ENCODE measurements at regions of chr17 and their contacts with region 1.

Region 1: DNA sequence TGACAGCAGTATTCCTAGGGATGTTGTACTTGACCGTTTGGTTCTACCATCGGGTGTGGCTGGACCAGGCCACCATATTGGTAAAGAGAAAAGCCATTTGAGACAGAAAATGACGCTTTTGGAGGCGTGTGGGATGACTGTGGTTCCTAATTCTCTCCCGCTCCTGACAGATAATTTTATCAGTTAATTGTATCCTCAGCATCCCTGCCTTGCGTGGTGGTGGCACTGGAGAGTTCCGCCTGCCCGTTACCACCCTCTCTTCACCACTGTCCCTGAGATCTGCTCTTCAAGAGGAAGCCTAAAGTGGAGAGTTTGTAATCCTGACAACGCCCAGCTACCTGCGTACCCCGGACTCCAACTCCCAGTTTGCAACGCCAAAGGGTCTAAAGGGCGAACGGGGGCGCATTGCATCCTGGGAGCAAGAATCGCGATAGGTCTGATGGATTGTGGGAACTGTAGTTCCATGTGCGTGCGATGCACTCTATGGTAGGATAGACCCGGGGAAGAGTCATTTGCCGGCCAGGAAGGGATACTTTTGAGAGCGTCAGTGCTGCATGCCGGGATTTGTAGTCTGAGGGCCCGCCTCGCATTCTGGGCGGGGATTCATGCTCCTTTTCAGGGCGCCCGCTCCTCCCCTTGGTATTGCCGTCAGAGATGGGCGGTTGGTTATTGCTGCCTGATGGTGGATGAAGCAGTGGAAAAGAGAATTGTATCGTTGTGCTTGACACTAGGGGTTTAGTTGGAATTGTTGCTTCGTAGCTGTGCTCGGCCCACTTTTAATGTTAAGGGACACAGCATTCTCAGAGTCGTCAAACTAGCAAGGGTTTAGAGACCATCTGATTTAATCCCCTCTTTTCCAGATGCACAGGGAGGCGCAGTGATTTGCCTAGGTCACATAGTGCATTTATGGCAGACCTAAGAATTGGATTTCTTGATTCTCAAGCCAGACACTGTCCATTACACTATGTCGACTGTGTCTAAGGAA is 965 bp upstream of the PHF12 start:
- DNase-seq: peak; percentile 94
- ATAC-seq: peak; percentile 74
- H3K4me3 Mint-ChIP-seq: no peak overlapping the region
- H3K27ac Mint-ChIP-seq: no peak overlapping the region
- H3K4me1 Mint-ChIP-seq: peaks cover 28% of the 10 kb centered on the region
- H3K27me3 Mint-ChIP-seq: no peaks in the 10 kb centered on the region
- CTCF ChIP-seq: no peak

Region 2: GRCh38 chr17:28698253-28698941 is 253.9 kb before region 1 on chr17:
- CTCF ChIA-PET with region 1: no interaction called
- POLR2A ChIA-PET with region 1: no interaction called
- DNase-seq: no peak
- ATAC-seq: no peak
- H3K4me3 Mint-ChIP-seq: no peak overlapping the region
- H3K27ac Mint-ChIP-seq: no peak overlapping the region
- H3K4me1 Mint-ChIP-seq: peaks cover 9% of the 10 kb centered on the region
- H3K27me3 Mint-ChIP-seq: no peaks in the 10 kb centered on the region
- CTCF ChIP-seq: no peak

Region 3: GRCh38 chr17:28902819-28903545 is 49.3 kb before region 1 on chr17 and contains the start of gene DHRS13:
- CTCF ChIA-PET with region 1: interaction called, 11 read pairs
- POLR2A ChIA-PET with region 1: interaction called, 3 read pairs
- DNase-seq: peak; percentile 95
- ATAC-seq: peak; percentile 89
- H3K4me3 Mint-ChIP-seq: peak within 1 kb of the TSS; percentile 85
- H3K27ac Mint-ChIP-seq: peak within 1 kb of the TSS; percentile 61
- H3K4me1 Mint-ChIP-seq: peaks cover 31% of the 10 kb centered on the region
- H3K27me3 Mint-ChIP-seq: no peaks in the 10 kb centered on the region
- CTCF ChIP-seq: peak; percentile 100
- total RNA-seq, gene DHRS13: 26.5 to 29.5 TPM (median 28.5 TPM) in 3 replicates

Region 4: DNA sequence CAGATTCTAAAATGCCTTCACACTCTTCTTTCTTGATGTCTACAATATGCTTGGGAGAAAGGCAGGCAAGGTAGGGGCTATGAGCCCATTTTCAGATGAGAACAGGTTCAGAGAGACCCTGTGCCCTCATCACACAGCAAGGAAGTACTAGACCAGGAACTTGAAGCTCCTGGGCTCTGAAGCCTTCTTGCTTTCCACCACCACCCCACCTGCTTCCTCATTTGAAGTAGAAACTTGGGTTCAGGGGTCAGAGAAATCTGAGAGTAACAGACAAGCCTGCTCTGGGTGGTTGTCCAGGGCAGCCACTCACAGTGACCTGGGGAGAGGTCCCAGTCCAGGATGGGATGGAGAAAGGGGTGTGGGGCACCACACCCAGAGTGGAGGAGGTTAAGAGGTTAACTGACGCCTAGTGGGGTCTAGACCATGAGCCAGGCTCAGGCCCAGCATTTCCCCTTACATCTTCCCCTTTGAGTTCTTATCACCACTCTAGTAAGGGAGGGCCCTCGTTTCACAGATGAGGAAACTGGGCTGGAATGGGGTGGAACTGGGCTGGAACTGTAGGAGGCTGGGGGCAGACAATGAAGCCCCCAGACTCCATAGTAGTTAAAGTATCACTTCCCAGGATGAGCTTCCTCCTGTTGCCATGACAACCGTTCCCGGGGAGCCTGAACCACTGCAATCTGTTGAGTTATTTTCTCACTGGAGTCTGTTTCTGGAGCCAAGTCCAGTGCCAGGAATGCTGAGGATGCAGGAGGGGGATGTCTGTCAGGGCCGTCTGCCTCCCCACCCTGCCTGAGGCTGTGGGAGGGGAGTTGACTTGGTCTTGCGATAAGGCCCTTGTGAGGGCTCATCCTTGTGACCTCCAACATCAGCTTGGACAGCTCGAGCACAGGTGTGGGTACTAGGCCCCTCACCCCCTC is 15.2 kb after region 1 on chr17:
- CTCF ChIA-PET with region 1: interaction called, 49 read pairs
- POLR2A ChIA-PET with region 1: interaction called, 4 read pairs
- DNase-seq: no peak
- ATAC-seq: no peak
- H3K4me3 Mint-ChIP-seq: no peak overlapping the region
- H3K27ac Mint-ChIP-seq: 0 out of 2 replicates have a peak overlapping the region, but pooled peaks have one; percentile 14
- H3K4me1 Mint-ChIP-seq: peaks cover 43% of the 10 kb centered on the region
- H3K27me3 Mint-ChIP-seq: no peaks in the 10 kb centered on the region; the same call in 1 of the 2 replicates
- CTCF ChIP-seq: no peak

Region 5: DNA sequence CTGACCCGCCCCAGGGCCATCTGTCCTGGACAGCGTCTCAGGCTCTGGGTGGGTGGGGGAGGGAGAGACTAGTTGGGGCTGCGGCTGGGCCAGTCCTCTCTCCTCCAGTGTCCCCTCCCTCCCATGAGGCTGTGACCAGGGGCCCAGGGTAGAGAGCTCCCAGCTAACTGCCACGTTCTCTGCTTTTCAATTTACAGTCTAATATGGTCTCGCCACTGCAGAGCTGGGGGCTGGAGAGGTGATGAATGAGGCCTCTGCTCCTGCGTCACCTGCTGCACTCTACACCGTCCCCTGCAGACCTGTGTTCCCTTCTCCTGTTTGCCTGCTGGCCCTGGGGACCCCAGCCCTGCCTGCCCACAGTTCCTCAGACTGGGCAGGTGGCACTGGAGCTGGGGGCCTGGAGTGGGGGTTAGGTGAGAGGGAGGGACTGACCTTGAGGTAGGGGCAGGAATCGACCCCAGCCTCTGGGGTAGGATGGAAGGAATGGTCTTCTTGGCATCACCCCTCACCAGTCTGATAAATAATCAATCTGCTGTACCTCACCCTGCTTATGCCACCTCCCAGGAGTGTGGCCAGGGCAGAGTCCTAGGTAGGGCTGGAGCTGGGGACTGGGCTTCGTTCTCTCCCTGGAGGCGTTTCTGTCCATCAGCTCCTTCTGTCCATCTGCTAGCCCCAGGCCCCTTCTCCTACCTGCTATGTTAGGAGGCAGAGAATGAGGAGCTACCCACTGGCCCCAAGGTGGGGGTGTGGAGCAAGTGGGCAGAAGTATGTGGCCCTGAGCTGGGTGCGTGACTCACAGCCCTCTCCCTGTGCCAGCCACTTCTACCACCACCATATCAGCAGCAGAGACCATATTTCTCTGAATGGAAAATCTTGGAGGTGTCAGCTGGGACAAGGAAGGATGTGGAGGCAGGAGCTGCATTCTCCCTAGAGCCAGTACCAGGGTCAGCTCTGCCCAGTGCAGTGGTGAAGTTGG is 40.6 kb after region 1 on chr17:
- CTCF ChIA-PET with region 1: interaction called, 18 read pairs
- POLR2A ChIA-PET with region 1: no interaction called
- DNase-seq: no peak
- ATAC-seq: no peak
- H3K4me3 Mint-ChIP-seq: no peak overlapping the region
- H3K27ac Mint-ChIP-seq: no peak overlapping the region
- H3K4me1 Mint-ChIP-seq: peaks cover 18% of the 10 kb centered on the region
- H3K27me3 Mint-ChIP-seq: peaks cover 23% of the 10 kb centered on the region
- CTCF ChIP-seq: no peak

Region 6: GRCh38 chr17:29042679-29043538 is 90.6 kb after region 1 on chr17 and contains the start of gene PIPOX:
- CTCF ChIA-PET with region 1: interaction called, 10 read pairs
- POLR2A ChIA-PET with region 1: no interaction called
- DNase-seq: peak; percentile 80
- ATAC-seq: peak; percentile 87
- H3K4me3 Mint-ChIP-seq: peak within 1 kb of the TSS; percentile 41
- H3K27ac Mint-ChIP-seq: peak within 1 kb of the TSS; percentile 98
- H3K4me1 Mint-ChIP-seq: peaks cover 63% of the 10 kb centered on the region
- H3K27me3 Mint-ChIP-seq: no peaks in the 10 kb centered on the region
- CTCF ChIP-seq: no peak
- total RNA-seq, gene PIPOX: 32.4 to 34.2 TPM (median 34.1 TPM) in 3 replicates

Region 7: DNA sequence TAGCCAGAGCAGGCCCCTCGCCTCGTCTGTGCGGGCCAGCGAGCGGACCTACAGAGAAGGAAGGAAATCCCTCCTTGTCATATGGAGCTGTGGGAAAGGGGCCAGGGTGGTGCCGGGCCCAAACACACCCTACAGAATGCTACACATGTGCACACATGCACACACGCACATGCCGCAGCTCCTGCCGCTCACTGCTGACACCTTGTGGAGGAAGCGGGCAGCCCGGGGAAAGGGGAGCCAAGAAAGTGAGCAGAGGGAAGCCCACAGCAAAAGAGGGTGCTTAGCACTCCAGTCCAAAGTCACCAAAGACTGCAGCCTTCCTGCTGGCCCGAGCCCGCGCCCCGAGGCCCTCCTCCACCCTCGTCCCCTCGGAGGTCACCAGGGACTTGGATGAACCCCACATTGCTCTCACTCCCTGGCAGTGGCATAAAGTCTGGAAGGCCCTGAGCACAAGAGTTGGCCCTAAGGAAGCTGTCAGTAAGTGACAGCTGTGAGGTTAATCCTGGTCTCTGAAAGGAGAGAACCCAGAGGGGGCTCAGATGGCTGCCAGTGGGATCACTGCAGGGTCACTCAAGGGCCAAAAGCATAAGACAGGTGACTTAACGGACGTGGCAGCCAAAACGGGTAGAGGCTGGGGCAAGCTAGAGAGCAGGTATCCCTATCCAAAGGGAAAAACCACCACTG is 159.7 kb after region 1 on chr17:
- CTCF ChIA-PET with region 1: interaction called, 762 read pairs
- POLR2A ChIA-PET with region 1: no interaction called
- DNase-seq: peak; percentile 83
- ATAC-seq: peak; percentile 45
- H3K4me3 Mint-ChIP-seq: no peak overlapping the region
- H3K27ac Mint-ChIP-seq: no peak overlapping the region
- H3K4me1 Mint-ChIP-seq: peaks cover 27% of the 10 kb centered on the region
- H3K27me3 Mint-ChIP-seq: no peaks in the 10 kb centered on the region
- CTCF ChIP-seq: peak; percentile 72

Region 8: DNA sequence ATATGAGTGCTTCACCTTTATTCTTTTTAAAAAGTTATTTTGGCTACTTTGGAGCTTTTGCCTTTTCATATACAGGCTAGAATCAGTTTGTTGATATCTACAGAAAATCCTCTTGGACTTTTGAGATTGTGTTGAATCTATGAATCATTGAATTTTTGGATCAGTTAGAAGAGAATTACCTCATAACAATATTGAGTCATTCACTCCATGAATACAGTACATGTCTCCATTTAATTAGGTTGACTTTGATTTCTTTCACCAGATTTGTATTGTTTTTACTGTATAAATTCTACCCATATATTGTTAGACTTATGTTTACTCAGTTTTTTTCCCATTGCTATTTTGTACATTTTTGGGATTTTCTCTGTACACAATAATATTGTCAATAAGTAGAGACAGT is 492.3 kb after region 1 on chr17:
- CTCF ChIA-PET with region 1: no interaction called
- POLR2A ChIA-PET with region 1: no interaction called
- DNase-seq: no peak
- ATAC-seq: no peak
- H3K4me3 Mint-ChIP-seq: no peak overlapping the region
- H3K27ac Mint-ChIP-seq: no peak overlapping the region
- H3K4me1 Mint-ChIP-seq: peaks cover 28% of the 10 kb centered on the region
- H3K27me3 Mint-ChIP-seq: no peaks in the 10 kb centered on the region
- CTCF ChIP-seq: no peak